ENCODE measurements at regions of chr16 and their contacts with region 1.

Region 1: GRCh38 chr16:3059000-3059722 is 6.3 kb upstream of the IL32 start:
- DNase-seq: peak; percentile 93
- ATAC-seq: peak; percentile 95

Region 2: DNA sequence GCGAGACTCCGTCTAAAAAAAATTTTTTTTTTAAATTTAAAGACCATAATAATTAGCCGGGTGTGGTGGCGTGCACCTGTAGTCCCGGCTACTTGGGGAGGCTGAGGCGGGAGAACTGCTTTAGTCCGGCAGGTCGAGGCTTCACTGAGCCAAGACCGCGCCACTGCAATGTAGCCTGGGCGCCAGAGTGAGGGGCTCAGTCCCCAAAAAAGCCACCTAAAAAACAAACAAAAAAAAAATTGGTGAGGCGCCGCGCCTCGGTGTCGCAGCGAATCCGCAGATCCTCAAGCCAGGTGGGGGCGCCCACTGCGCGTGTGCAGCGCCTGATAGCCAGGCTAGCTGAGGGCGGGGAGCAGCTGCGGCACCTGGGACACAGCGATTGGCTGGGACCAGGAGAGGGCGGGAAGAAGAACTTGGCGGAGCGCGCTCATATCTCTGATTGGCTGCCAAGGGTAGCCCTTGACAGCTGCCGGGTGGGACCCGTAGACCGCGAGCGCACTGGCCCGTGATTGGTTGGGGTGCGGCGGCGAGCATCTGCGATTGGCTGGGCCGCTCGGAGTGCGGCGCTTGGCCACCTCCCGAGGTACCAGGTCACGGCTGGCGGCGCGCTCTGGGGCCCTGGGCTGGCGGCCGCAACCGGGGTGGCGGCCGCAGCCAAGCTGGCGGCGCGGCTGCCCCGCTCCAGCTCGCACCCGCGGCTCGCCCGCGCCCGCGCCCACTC is 55.4 kb before region 1 on chr16:
- intact Hi-C with region 1: no loop called
- DNase-seq: peak; percentile 98
- ATAC-seq: peak; percentile 98

Region 3: GRCh38 chr16:3074860-3075522 is 15.8 kb after region 1 on chr16:
- intact Hi-C with region 1: no loop called
- DNase-seq: peak; percentile 84
- ATAC-seq: peak; percentile 29

Region 4: DNA sequence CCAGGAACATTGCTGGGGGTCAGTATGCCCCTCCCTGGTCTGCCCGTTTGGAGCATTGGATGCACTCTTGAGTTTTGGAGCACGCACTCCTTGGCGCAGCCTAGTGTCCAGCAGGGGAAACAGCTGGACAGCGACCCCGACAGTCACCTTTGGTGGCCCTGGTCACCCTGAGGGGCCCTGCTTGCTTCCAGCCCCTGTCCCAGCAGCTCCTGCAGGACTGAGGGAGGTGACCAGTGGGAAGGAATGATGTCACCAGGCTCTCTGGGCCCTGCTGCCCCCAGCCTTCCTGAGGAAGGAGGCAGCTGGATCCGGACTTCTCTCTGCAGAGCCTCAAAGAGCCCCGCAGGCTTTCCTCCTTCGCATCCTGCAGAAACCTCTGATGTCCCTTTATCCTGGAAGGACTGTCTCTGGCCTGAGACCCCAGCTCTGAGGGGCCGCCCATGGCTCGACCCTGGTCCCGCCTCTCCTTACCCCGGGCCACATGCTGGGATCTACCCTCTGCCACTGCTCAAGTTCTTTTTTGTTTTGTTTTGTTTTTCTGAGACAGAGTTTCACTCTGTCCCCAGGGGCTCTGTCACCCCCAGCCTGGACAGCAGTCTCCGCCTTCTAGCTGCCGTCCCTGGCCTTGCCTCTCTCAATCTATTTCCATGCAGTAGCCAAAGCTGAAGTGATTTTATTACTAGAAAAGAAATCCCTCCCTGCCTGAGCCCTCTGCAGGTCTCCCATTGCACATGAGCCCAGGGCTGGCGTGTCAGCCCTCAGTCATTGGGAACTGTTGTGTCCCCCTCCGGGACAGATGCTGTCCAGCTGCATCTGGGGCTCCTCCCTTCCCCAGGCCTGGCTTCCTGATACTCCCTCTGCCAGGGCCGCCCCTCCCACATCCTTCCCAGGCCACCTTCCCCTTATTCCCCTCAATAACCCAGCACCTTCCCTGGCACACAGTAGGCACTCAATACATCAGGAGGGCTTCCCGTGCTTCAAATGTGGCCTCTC is 28.4 kb after region 1 on chr16:
- intact Hi-C with region 1: loop called (anchors 2 kb)
- DNase-seq: no peak
- ATAC-seq: peak; percentile 69

Region 5: DNA sequence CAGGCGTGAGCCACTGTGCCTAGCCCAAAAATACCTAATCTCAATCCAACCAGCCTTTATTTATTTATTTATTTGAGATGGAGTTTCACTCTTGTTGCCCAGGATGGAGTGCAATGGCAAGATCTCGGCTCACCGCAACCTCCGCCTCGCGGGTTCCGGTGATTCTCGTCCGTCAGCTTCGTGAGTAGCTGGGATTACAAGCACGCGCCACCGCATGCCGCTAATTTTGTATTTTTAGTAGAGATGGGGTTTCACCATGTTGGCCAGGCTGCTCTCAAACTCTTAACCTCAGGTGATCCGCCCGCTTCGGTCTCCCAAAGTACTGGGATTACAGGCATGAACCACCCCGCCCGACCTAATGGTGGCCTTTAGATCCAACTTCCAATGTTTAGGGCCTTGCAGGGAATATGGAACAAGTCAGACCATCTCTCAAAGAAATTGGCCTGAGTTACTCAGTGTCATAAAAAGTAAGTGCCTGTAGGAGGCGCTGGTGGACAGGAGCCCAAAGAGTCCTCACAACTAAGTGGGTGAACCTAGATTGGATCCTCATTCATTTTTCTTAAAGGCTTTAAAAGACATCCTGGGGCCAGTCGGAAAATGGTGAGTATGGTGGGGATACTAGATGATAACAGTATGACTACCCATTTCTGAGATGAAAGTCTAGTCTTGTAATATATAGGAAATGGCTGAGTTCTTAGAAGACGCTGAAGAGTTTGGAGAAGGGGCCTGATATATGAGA is 35.3 kb after region 1 on chr16:
- intact Hi-C with region 1: loop called (anchors 2 kb)
- DNase-seq: no peak
- ATAC-seq: no peak

Region 6: GRCh38 chr16:3106205-3106928 is 47.2 kb after region 1 on chr16:
- intact Hi-C with region 1: loop called (anchors 5 kb)
- DNase-seq: peak; percentile 95
- ATAC-seq: peak; percentile 97

Region 7: DNA sequence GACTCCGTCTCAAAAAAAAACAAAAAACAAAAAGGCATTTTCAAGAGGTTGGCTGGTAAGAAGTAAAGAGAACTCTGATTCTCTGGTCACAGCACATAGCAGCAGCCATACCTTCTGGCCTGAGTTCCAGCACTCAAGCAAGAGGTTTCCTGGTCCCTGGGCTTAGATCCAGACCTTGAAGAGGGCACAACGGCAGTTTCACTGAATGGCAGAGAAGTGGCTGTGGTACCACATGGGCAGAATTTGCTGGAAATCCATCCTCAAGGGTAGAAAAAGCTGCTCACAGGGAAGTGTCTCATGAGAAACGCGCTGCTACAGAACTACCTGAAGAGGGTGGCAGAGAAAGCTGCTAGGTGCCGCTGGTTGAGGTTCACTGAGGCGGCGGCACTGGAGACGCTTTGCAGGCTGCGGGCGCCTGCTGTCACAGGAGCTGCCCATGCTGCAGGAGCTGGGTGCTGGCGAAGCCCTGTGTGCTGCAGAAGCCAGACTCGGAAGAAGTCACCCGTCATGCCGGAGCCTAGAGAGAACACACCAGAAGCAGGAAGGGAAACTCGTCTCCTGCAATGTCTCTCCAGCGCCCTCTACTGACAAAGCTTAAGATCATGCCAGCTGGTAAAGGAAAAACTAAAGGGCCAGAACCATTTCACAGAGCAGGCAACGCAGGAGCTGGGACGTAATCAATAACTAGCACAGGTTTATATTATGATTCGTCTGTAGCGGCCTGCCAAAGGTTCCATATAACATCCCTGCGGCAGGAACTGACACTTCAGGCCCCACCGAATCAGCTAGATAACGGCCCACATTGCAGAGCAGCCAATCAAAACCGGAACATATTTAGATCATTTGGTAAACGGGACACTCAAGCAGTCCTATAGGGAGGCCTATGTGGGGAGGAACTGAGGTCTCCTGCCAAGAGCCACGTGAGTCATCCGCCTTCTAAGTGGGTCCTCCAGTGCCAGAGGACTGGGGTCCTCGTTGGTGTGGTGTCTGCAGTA is 70.3 kb after region 1 on chr16:
- intact Hi-C with region 1: loop called (anchors 2 kb)
- DNase-seq: peak; percentile 85
- ATAC-seq: peak; percentile 81

Region 8: GRCh38 chr16:3150346-3151218 is 91.4 kb after region 1 on chr16:
- intact Hi-C with region 1: loop called (anchors 1 kb)
- DNase-seq: peak; percentile 96
- ATAC-seq: peak; percentile 94

Region 9: DNA sequence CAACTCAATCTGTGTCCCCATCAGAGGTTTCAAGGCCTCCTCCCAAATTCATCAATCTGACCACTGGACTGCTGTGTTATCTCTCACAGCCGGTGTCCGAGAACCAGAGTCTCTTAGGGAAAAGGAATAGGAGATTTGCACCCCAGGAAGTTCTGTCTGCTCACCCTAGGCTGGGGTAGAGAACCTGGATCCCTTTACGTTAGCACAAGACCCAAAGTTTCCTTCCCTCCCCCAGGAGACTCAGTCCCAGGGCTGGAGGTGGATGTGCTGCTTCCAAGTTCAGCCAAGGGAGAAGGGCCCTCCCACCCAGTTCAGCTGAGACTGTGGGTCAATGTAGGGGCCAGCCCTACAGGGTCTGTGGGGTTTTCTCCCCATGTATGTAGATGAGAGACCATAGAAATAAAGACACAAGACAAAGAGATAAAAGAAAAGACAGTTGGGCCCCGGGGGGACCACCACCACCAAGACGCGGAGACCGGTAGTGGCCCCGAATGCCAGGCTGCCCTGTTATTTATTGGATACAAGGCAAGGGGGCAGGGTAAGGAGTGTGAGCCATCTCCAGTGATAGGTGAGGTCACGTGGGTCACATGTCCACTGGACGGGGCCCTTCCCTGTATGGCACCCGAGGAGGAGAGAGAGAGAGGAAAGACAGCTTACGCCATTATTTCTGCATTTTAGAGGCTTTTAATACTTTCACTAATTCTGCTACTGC is 106.1 kb after region 1 on chr16:
- intact Hi-C with region 1: loop called (anchors 5 kb)
- DNase-seq: no peak
- ATAC-seq: no peak